Mammary epithelial cell (primary cell): ENCODE measurements at regions of chr6 and their contacts with region 1.

Region 1: GRCh38 chr6:106979427-106979884 is 4.9 kb upstream of the CD24 start:
- DNase-seq: peak; percentile 68
- H3K4me3 ChIP-seq: no peak overlapping the region
- H3K27ac ChIP-seq: no peak overlapping the region
- H3K4me1 ChIP-seq: no peaks in the 10 kb centered on the region
- H3K27me3 ChIP-seq: no peaks in the 10 kb centered on the region
- CTCF ChIP-seq: peak; percentile 95 to 99

Region 2: GRCh38 chr6:106360410-106360988 is 619.0 kb before region 1 on chr6 and contains the start of gene CRYBG1:
- CTCF ChIA-PET with region 1: no interaction called
- dilution Hi-C with region 1: no loop called
- in situ Hi-C with region 1: no loop called
- intact Hi-C with region 1: loop called (anchors 5 kb)
- DNase-seq: peak; percentile 91
- H3K4me3 ChIP-seq: peak within 1 kb of the TSS; percentile 82 to 94 (median 92)
- H3K27ac ChIP-seq: peak within 1 kb of the TSS; percentile 68
- H3K4me1 ChIP-seq: peaks cover 14% of the 10 kb centered on the region
- H3K27me3 ChIP-seq: no peaks in the 10 kb centered on the region
- CTCF ChIP-seq: peak; percentile 71 to 89
- total RNA-seq, gene CRYBG1: 78.5 to 92.9 TPM

Region 3: GRCh38 chr6:106574741-106575458 is 404.6 kb before region 1 on chr6:
- CTCF ChIA-PET with region 1: no interaction called
- dilution Hi-C with region 1: no loop called
- in situ Hi-C with region 1: loop called in 1 of 2 experiments (anchors 25 kb)
- intact Hi-C with region 1: no loop called
- DNase-seq: peak; percentile 48
- H3K4me3 ChIP-seq: no peak overlapping the region
- H3K27ac ChIP-seq: no peak overlapping the region
- H3K4me1 ChIP-seq: peaks cover 6% of the 10 kb centered on the region
- H3K27me3 ChIP-seq: no peaks in the 10 kb centered on the region
- CTCF ChIP-seq: no peak

Region 4: GRCh38 chr6:106629103-106629858 is 350.2 kb before region 1 on chr6 and contains the starts of genes QRSL1 and RTN4IP1:
- CTCF ChIA-PET with region 1: interaction called, 4 read pairs
- dilution Hi-C with region 1: no loop called
- in situ Hi-C with region 1: no loop called
- intact Hi-C with region 1: loop called (anchors 1 kb)
- DNase-seq: peak; percentile 90
- H3K4me3 ChIP-seq: peak within 1 kb of the TSS; percentile 72 to 99 (median 99)
- H3K27ac ChIP-seq: peak within 1 kb of the TSS; percentile 93
- H3K4me1 ChIP-seq: peaks cover 4% of the 10 kb centered on the region
- H3K27me3 ChIP-seq: no peaks in the 10 kb centered on the region
- CTCF ChIP-seq: no peak
- total RNA-seq, gene QRSL1: 10.8 to 14.9 TPM
- total RNA-seq, gene RTN4IP1: 4.3 to 7.4 TPM

Region 5: DNA sequence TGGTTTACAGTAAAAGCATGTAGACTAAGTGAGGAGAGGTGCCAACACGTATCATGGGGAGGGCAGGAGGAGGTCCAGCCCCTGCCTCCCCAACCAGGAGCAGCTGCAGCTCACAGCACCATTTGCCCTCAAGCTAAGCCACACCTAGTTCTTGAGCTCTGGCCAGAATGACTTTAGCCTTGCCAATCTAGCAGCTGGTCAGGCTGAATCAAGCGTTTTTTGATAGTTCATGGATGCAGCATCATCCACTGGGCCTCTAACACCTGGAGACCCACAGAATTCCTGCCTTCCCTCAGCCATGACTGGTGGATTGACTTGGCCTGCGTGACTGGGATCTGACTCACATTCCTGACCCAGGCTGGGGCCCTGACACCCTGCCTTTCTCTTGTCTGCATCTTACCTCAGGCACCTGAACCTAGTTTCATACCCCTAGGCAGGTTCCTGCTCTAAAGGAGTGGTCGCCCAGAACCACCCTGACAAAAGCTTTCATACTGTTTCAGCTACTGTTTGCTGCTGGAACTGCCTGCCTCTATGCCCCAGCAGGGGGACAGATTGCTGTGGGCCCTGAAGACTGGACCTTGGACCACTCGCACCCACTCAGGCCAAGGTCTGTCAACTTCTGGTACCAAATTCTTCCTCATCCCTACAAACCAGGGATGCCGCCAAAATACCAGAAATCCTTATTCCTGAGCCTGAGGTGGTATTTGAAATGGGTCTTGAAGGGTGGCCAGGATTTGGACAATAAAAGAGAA is 227.8 kb before region 1 on chr6:
- CTCF ChIA-PET with region 1: no interaction called
- dilution Hi-C with region 1: no loop called
- in situ Hi-C with region 1: no loop called
- intact Hi-C with region 1: loop called (anchors 1 kb)
- DNase-seq: peak; percentile 100
- H3K4me3 ChIP-seq: no peak overlapping the region
- H3K27ac ChIP-seq: peak overlapping the region; percentile 91
- H3K4me1 ChIP-seq: peaks cover 40% of the 10 kb centered on the region
- H3K27me3 ChIP-seq: no peaks in the 10 kb centered on the region
- CTCF ChIP-seq: peak in 1 of 2 donors; percentile 25

Region 6: GRCh38 chr6:106799008-106799894 is 180.2 kb before region 1 on chr6:
- CTCF ChIA-PET with region 1: no interaction called
- dilution Hi-C with region 1: no loop called
- in situ Hi-C with region 1: no loop called
- intact Hi-C with region 1: loop called (anchors 5 kb)
- DNase-seq: peak; percentile 96
- H3K4me3 ChIP-seq: no peak overlapping the region
- H3K27ac ChIP-seq: peak overlapping the region; percentile 90
- H3K4me1 ChIP-seq: peaks cover 38% of the 10 kb centered on the region
- H3K27me3 ChIP-seq: no peaks in the 10 kb centered on the region
- CTCF ChIP-seq: no peak

Region 7: GRCh38 chr6:107075951-107076381 is 96.5 kb after region 1 on chr6:
- CTCF ChIA-PET with region 1: no interaction called
- dilution Hi-C with region 1: no loop called
- in situ Hi-C with region 1: no loop called
- intact Hi-C with region 1: no loop called
- DNase-seq: peak; percentile 9
- H3K4me3 ChIP-seq: no peak overlapping the region
- H3K27ac ChIP-seq: no peak overlapping the region
- H3K4me1 ChIP-seq: no peaks in the 10 kb centered on the region
- H3K27me3 ChIP-seq: no peaks in the 10 kb centered on the region
- CTCF ChIP-seq: peak; percentile 5 to 36

Region 8: GRCh38 chr6:107435798-107436197 is 456.3 kb after region 1 on chr6:
- CTCF ChIA-PET with region 1: no interaction called
- dilution Hi-C with region 1: no loop called
- in situ Hi-C with region 1: no loop called
- intact Hi-C with region 1: no loop called
- DNase-seq: no peak
- H3K4me3 ChIP-seq: no peak overlapping the region
- H3K27ac ChIP-seq: no peak overlapping the region
- H3K4me1 ChIP-seq: no peaks in the 10 kb centered on the region
- H3K27me3 ChIP-seq: no peaks in the 10 kb centered on the region
- CTCF ChIP-seq: no peak